Heart left ventricle (tissue), 16 donors: ENCODE measurements at regions of chr2 and their contacts with region 1.

Region 1: DNA sequence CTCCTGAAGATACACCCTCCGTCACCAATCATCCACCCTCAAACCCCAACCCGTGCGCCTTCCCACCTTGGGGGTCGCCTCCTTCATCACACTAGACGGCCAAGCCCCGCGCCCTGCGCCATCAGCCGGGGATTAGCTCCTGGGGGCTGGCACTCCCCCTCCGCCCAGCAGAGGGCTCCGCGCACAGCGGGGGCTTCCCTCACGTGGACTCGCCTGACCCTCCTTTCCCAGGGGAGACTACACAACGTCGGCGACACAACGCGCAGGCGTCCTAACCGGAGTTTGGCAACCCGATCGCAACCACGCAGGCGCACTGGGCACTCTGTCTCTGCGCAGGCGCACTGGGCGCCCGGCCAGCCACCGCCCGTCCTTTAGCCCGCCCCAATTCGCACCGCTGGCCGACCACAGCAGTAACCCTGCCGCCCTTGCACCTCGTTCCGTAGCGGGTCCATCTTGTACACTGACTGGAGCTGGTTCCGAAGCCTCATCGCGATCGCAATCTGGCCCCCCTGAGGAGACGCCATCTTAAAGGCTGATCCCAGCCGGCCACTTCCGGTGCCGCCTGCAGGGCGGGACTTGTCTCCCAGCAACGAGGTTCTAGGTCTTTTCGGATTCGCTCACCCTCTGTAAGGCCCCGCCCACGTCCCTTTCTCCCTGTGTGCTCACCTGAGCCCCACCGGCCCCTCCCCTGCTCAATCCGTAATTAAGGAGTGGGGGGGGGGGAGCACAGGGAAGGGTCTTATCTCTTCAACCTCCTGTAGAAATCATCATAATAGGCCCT is at the start of gene PCGF1:
- DNase-seq: peak; percentile 99 to 100 (median 99)
- ATAC-seq: peak; percentile 95 to 97 (median 96)
- H3K4me3 ChIP-seq: peak within 1 kb of the TSS; percentile 41 to 92 (median 78)
- H3K27ac ChIP-seq: peak within 1 kb of the TSS; percentile 95 to 100 (median 98)
- H3K4me1 ChIP-seq: peaks cover 4 to 55% (median 35%) of the 10 kb centered on the region in 12 donors
- H3K27me3 ChIP-seq: peaks cover 9 to 53% (median 23%) of the 10 kb centered on the region in 9 donors
- CTCF ChIP-seq: peak; percentile 21 to 64 (median 42)
- POLR2A ChIP-seq: peak in 1 of 2 donors; percentile 55
- total RNA-seq, gene PCGF1: 10.6 to 22.3 (median 16.5) TPM

Region 2: GRCh38 chr2:74482801-74483674 is 24.3 kb before region 1 on chr2 and contains the starts of genes CCDC142 and TTC31:
- intact Hi-C with region 1: loop called in 2 of 10 experiments (anchors 1 to 2 kb)
- DNase-seq: peak; percentile 96 to 97 (median 97)
- ATAC-seq: peak; percentile 98 to 99 (median 98)
- H3K4me3 ChIP-seq: peak within 1 kb of the TSS; percentile 71 to 98 (median 88)
- H3K27ac ChIP-seq: peak within 1 kb of the TSS; percentile 73 to 97 (median 92)
- H3K4me1 ChIP-seq: peaks cover 5 to 31% (median 25%) of the 10 kb centered on the region in 12 donors
- H3K27me3 ChIP-seq: no peaks in the 10 kb centered on the region
- CTCF ChIP-seq: peak; percentile 77 to 97 (median 88)
- POLR2A ChIP-seq: peak in 1 of 2 donors; percentile 37
- total RNA-seq, gene CCDC142: 4.4 to 13.4 (median 7.1) TPM
- total RNA-seq, gene TTC31: 7.1 to 14.2 (median 10.0) TPM

Region 3: DNA sequence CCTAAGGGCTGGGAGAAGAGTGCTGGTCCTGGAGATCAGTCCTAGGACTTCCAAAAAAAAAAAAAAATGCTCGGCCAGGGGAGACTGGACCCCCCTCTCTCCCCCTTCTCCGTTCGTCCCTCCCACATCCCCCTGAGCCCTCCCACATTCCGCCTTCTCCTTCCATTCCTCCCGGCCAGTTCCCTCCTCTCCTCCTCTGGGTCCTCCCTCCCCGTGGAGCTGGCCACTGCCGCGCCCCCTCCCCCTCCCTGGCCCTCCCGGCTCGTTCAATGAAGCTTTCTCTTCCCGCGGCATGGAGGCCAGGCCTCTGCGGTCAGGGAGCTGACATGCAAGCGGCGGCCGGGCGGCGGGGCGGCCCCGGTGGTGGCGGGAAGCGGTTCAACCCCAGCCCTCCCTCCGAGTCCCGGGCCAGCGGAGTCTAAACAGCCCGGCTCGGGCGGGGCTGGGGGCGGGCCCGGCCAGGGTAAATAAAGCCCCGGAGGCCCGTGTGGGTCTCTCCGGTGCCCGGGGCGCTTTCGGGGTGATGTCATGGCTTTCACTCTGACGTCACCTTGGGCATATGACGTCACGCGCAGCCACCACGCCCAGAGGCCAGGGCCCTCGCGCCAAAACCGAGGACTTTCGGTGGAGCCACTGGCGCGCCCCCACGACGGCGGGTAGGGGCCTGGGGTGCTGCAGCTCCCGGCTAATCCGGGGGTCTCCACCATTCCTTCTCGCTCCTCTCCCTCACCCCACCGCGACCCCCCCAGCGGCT is 46.7 kb after region 1 on chr2 and contains the start of gene LOXL3:
- intact Hi-C with region 1: loop called in 1 of 10 experiments (anchors 2 kb)
- DNase-seq: peak; percentile 84 to 88 (median 85)
- ATAC-seq: peak; percentile 47 to 82 (median 80)
- H3K4me3 ChIP-seq: peak within 1 kb of the TSS; percentile 57 to 87 (median 72)
- H3K27ac ChIP-seq: peak within 1 kb of the TSS; percentile 51 to 95 (median 86)
- H3K4me1 ChIP-seq: peaks cover 0 to 39% (median 20%) of the 10 kb centered on the region in 12 donors
- H3K27me3 ChIP-seq: peaks cover 0 to 7% (median 0%) of the 10 kb centered on the region in 9 donors
- CTCF ChIP-seq: no peak
- POLR2A ChIP-seq: peak in 1 of 2 donors; percentile 15
- total RNA-seq, gene LOXL3: 1.6 to 8.7 (median 3.0) TPM

Region 4: GRCh38 chr2:74576863-74577229 is 69.5 kb after region 1 on chr2:
- intact Hi-C with region 1: loop called in 2 of 10 experiments (anchors 5 kb)
- DNase-seq: peak in 1 of 5 donors; percentile 34
- ATAC-seq: peak; percentile 74 to 84 (median 80)
- H3K4me3 ChIP-seq: peak overlapping the region in 1 of 12 donors; percentile 2
- H3K27ac ChIP-seq: peak overlapping the region in 8 of 12 donors; percentile 19 to 90 (median 58)
- H3K4me1 ChIP-seq: peaks cover 0 to 61% (median 5%) of the 10 kb centered on the region in 12 donors
- H3K27me3 ChIP-seq: peaks cover 0 to 3% (median 0%) of the 10 kb centered on the region in 9 donors
- CTCF ChIP-seq: peak in 1 of 12 donors; percentile 8
- POLR2A ChIP-seq: no peak

Region 5: DNA sequence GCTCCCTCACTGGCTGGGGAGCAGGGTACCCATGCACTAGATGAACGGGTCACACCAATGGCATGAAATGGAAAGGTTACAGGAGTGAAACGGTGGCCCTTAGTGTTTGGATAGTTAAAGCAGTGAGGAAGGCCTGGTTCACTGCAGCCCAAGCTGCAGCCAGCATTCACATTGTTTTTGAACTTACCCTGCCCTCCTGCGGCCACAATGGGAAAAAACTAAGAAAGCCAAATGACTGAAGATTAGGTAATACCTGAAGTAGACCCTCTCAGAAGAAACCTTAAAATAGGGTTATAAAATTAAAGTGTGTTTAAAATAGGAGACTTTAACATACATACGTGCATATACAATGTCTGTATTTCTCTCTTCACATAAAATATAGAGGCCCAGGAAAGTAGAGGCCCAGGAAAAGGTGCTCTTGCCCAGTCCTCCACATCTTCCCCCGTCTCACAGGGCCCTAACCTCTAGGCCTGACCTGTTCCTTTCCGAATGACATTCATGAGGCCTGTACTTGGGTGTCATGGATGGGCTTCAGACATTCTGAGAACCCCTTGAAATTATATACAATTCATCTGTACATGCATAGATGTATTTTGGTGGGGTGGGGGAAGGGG is 80.4 kb after region 1 on chr2:
- intact Hi-C with region 1: loop called in 5 of 10 experiments (anchors 5 kb)
- DNase-seq: peak; percentile 48 to 62 (median 60)
- ATAC-seq: peak; percentile 71 to 92 (median 92)
- H3K4me3 ChIP-seq: no peak overlapping the region
- H3K27ac ChIP-seq: no peak overlapping the region
- H3K4me1 ChIP-seq: peaks cover 0 to 37% (median 0%) of the 10 kb centered on the region in 12 donors
- H3K27me3 ChIP-seq: peaks cover 0 to 34% (median 8%) of the 10 kb centered on the region in 9 donors
- CTCF ChIP-seq: peak; percentile 48 to 85 (median 74)
- POLR2A ChIP-seq: no peak